ENCODE measurements at regions of chr19 and their contacts with region 1.

Region 1: DNA sequence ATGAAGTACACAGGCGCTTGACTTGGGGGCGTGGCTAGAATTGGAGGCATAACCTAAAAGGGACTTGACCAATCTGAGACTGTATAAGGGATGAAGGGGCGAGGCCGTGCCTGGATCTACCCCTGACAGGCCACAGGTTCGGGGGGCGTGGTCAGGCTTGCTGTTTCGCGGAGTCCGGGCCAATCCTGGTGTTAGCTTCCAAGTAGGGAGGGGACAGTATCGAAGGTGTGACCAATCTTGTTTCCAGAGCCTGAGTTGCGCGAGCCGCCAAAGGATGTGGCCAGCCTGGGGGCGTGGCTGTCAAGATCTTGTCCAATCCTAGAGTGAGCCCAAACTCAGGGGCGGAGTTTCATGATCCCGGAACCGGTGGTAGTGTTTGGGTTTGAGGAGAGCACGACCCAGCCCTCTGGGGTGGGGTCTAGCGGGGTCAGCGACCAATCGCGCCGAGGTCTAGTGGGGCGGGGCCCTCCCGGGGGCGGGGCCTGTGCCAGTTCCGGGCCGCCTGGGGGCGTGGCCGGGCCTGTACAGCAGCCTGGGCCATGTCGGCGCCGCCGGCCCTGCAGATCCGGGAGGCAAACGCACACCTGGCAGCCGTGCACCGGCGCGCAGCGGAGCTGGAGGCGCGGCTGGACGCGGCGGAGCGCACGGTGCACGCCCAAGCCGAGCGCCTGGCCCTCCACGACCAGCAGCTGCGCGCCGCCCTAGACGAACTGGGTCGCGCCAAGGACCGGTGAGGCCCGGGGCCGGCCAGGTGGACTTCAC is at the start of gene VMAC:
- DNase-seq: peak; percentile 100
- H3K4me3 ChIP-seq: peak within 1 kb of the TSS; percentile 89
- H3K27ac ChIP-seq: peak within 1 kb of the TSS; percentile 78
- H3K4me1 ChIP-seq: peaks cover 15% of the 10 kb centered on the region
- CTCF ChIP-seq: no peak
- total RNA-seq, gene VMAC: 6.6 and 6.8 TPM in 2 replicates

Region 2: DNA sequence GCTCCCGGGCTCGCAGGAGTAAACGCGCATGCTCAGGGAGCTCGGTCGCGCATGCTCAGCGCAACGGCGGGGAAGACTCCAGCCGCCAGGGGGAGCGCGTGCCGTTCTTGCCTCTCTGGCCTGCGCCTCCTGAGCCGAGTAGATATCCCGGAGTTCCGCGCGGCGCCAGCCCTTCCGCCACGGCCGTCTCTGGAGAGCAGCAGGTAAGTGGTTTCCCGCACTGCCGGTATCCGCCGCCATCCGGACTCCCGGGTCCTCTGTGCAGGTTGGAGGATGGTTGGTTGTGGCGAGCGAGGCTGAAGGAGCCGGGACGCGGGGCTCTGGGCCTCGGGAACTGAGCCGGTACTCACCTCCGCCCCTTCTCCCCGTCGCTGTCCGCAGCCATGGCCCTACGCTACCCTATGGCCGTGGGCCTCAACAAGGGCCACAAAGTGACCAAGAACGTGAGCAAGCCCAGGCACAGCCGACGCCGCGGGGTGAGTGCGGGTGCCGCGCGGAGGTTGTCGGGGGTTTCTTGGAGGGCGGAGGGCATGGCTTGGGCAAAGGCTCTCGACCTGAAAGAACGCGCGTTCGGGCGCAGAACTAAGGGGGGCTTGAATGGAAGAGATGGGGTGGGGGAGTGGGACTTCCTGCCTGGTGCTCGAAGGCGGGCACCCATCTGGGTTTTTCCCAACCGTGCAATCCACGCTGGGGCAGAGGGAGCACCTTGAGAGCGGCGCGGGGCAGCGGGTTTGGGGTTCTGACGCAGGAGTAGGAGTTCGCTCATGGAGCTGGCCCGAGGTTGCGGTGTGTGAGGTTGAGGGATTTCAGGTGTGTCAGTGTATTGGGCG is 214.2 kb before region 1 on chr19 and contains the start of gene RPL36:
- CTCF ChIA-PET with region 1: no interaction called
- POLR2A ChIA-PET with region 1: no interaction called
- intact Hi-C with region 1: loop called (anchors 2 kb)
- DNase-seq: peak; percentile 97
- H3K4me3 ChIP-seq: peak within 1 kb of the TSS; percentile 88
- H3K27ac ChIP-seq: peak within 1 kb of the TSS; percentile 73
- H3K4me1 ChIP-seq: peaks cover 18% of the 10 kb centered on the region
- CTCF ChIP-seq: peak; percentile 85
- total RNA-seq, gene RPL36: 1,836 and 1,936 TPM in 2 replicates

Region 3: DNA sequence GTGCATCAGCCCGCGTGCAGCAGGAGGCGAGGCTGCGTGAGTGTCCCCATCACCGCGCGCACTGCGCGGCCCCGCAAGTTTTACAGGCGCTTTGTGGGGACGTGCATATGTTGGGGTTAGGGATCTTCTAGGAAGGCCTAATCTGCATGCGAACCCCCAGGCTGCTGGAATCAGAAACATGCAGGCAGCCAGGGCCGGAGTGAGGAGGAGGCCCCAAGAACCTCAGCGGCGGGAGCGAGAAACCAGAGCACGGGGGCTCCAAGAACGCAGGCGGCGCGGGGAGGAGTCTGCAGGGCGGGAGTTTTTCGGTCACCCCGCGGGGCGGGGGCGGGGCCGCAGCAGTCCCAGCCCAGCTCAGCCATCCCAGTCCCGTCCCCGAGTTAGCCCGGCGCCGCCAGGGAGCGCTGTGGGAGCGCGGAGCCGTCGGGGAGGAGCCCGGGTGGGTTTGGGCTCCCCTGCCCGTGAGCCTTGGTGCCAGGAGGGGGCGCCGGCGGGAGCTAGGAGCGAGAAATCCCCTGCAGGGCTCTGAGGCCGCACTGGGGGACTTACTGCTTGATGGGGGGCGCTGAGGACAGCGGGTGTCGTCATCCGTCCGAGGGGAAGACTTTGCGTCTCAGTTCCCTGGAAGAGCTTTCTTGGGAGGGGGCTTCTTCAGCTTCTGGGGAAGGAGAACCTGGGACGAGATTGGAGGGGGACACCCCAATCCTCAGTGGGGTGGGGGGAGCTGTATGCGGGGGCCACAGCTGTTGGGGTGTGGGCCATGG is 100.6 kb before region 1 on chr19:
- CTCF ChIA-PET with region 1: interaction called, 12 read pairs
- POLR2A ChIA-PET with region 1: no interaction called
- intact Hi-C with region 1: no loop called
- DNase-seq: peak; percentile 93
- H3K4me3 ChIP-seq: peak overlapping the region; percentile 55
- H3K27ac ChIP-seq: no peak overlapping the region
- H3K4me1 ChIP-seq: peaks cover 17% of the 10 kb centered on the region
- CTCF ChIP-seq: peak; percentile 100

Region 4: GRCh38 chr19:5827891-5828660 is 76.5 kb before region 1 on chr19:
- CTCF ChIA-PET with region 1: no interaction called
- POLR2A ChIA-PET with region 1: interaction called, 3 read pairs
- intact Hi-C with region 1: loop called (anchors 1 kb)
- DNase-seq: peak; percentile 95
- H3K4me3 ChIP-seq: peak overlapping the region; percentile 72
- H3K27ac ChIP-seq: peak overlapping the region; percentile 91
- H3K4me1 ChIP-seq: peaks cover 37% of the 10 kb centered on the region
- CTCF ChIP-seq: no peak

Region 5: GRCh38 chr19:5953680-5954213 is 49.2 kb after region 1 on chr19:
- CTCF ChIA-PET with region 1: no interaction called
- POLR2A ChIA-PET with region 1: interaction called, 4 read pairs
- intact Hi-C with region 1: loop called (anchors 5 kb)
- DNase-seq: no peak
- H3K4me3 ChIP-seq: no peak overlapping the region
- H3K27ac ChIP-seq: peak overlapping the region; percentile 96
- H3K4me1 ChIP-seq: peaks cover 81% of the 10 kb centered on the region
- CTCF ChIP-seq: no peak

Region 6: GRCh38 chr19:5977785-5978605 is 73.5 kb after region 1 on chr19 and contains the start of gene RANBP3:
- CTCF ChIA-PET with region 1: no interaction called
- POLR2A ChIA-PET with region 1: no interaction called
- intact Hi-C with region 1: loop called (anchors 2 kb)
- DNase-seq: peak; percentile 100
- H3K4me3 ChIP-seq: peak within 1 kb of the TSS; percentile 97
- H3K27ac ChIP-seq: peak within 1 kb of the TSS; percentile 73
- H3K4me1 ChIP-seq: peaks cover 47% of the 10 kb centered on the region
- CTCF ChIP-seq: no peak
- total RNA-seq, gene RANBP3: 63.7 and 74.3 TPM in 2 replicates

Region 7: DNA sequence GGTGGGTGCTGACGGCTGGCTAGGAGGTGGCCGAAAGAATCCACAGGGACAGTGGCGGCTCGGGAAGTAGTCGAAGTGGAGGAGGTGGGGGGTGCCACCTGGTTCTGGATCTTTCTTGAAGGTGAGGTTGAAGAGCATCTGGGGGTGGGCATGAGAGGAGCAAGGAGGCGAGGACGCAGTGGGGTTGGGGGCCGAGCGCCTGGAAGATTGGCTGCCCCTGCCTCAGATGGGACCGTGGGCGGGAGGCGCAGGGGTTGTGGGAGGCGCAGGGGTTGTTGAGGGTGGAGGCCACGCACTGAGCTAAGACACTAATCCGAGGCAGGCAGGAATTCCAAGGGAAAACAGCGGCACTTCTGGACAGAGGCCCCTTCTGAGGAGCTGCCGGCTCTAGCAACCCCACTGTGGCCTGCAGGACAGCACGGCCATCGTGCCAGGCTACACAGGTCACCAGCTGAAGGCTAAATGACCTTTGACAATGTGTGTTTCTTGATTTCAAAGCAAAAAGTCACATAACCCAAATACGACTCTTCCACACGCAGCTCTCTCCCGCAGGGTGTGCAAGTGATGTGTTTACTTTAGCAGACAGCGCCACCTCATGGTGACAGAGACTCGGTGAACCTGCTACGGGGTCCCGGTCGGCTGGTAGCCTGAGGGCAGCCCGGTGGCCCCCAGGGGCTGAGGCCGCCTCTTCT is 117.5 kb after region 1 on chr19:
- CTCF ChIA-PET with region 1: no interaction called
- POLR2A ChIA-PET with region 1: no interaction called
- intact Hi-C with region 1: loop called (anchors 10 kb)
- DNase-seq: peak; percentile 89
- H3K4me3 ChIP-seq: no peak overlapping the region
- H3K27ac ChIP-seq: no peak overlapping the region
- H3K4me1 ChIP-seq: no peaks in the 10 kb centered on the region
- CTCF ChIP-seq: peak; percentile 85